Motor neuron (in vitro differentiated cells): ENCODE measurements at regions of chr4 and their contacts with region 1.

Region 1: DNA sequence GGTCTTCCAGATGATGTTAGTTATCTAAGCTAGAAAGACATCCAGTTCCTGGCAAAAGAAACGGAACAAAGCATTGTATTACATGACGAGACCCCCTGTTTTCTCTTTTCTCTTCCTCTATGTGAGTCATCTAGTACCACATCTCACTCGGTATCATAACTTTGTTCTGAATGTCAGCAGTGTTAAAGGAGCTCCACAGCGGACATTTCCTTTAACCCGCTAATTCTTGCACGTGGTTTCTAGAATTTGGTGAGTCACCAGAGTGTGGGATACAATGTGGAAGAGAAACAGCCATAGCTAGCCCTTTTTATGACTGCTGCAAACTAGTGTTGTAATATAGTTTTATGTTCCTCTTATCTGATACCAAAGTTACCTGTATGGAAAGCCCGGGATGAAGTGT is 243.7 kb downstream of the TENM3 start:
- ATAC-seq: no peak
- H3K4me3 ChIP-seq: no peak overlapping the region
- H3K27ac ChIP-seq: no peak overlapping the region
- H3K4me1 ChIP-seq: no peaks in the 10 kb centered on the region

Region 2: GRCh38 chr4:182555997-182556418 is 69.1 kb after region 1 on chr4:
- in situ Hi-C with region 1: loop called in 1 of 9 experiments (anchors 10 kb)
- ATAC-seq: peak in 4 of 8 experiments; percentile 13 to 64 (median 47)
- H3K4me3 ChIP-seq: no peak overlapping the region
- H3K27ac ChIP-seq: no peak overlapping the region
- H3K4me1 ChIP-seq: peaks cover 17 to 63% of the 10 kb centered on the region in 2 donors